Naive thymus-derived CD4-positive, alpha-beta T cell (primary cell): ENCODE measurements at regions of chr7 and their contacts with region 1.

Region 1: GRCh38 chr7:20798081-20798693 is 11.5 kb upstream of the SP8 start:
- DNase-seq: no peak
- ATAC-seq: peak; percentile 69
- H3K4me3 ChIP-seq: no peak overlapping the region
- H3K4me3 Mint-ChIP-seq: peak overlapping the region in 5 of 10 donors; percentile 69 to 88 (median 81)
- H3K27ac ChIP-seq: no peak overlapping the region
- H3K27ac Mint-ChIP-seq: no peak overlapping the region
- H3K4me1 ChIP-seq: peaks cover 7 to 13% of the 10 kb centered on the region in 2 donors
- H3K4me1 Mint-ChIP-seq: peaks cover 13 to 22% (median 20%) of the 10 kb centered on the region in 7 donors
- H3K27me3 ChIP-seq: peaks cover 12 to 39% of the 10 kb centered on the region in 2 donors
- H3K27me3 Mint-ChIP-seq: peaks cover 50 to 70% (median 61%) of the 10 kb centered on the region in 5 donors

Region 2: DNA sequence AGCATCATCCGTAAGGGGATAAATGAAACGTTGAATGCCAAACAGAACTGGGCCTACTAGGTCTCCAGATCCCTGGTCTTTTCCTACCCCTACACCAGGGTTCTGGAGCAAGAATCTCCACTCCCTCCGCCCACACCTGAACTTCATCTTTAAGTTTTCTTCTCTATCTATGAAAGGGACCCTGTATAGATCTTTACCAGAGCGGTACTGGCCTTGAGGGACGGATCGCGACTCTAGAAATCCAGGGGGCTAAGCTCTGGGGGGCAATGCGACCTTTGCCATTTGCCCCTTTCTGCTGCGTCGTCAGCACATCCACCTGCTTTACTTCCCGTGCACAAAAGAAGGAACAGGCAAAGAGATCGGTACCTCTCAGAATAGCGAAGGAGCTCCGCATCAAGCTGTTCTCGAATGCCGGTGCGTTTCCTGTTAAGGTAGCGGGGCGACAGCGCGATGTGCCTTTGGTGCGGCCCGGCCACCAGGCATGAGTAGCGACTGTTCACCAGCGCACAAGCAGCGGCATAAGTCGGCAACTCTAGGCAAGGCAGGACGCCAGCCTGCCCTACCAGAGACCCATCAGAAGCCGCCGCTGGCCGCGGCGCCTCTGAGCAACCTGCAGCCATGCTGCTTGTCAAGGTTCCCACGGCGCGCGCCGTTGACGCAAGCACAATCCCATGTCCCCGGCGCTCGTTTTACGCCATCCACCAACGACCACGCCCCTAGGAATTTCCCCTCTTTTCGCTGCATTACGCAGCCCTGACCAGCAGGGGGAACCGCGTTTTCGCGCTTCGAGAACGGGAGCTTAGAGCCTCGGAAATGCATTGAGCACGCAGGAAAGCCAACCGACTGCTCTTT is 1089.6 kb before region 1 on chr7 and contains the start of gene POLR1F:
- CTCF ChIA-PET with region 1: no interaction called
- POLR2A ChIA-PET with region 1: interaction called, 3 read pairs
- intact Hi-C with region 1: loop called in 1 of 2 experiments (anchors 10 kb)
- DNase-seq: peak; percentile 84 to 97 (median 95)
- ATAC-seq: peak; percentile 98
- H3K4me3 ChIP-seq: peak within 1 kb of the TSS; percentile 70
- H3K4me3 Mint-ChIP-seq: peak within 1 kb of the TSS; percentile 95 to 99 (median 97)
- H3K27ac ChIP-seq: peak within 1 kb of the TSS; percentile 77
- H3K27ac Mint-ChIP-seq: peak within 1 kb of the TSS; percentile 89 to 98 (median 95)
- H3K4me1 ChIP-seq: peaks cover 19 to 23% of the 10 kb centered on the region in 2 donors
- H3K4me1 Mint-ChIP-seq: peaks cover 31 to 66% (median 57%) of the 10 kb centered on the region in 7 donors
- H3K27me3 ChIP-seq: no peaks in the 10 kb centered on the region
- H3K27me3 Mint-ChIP-seq: peaks cover 0 to 5% (median 0%) of the 10 kb centered on the region in 5 donors
- total RNA-seq, gene POLR1F: 11.8 to 27.3 (median 19.0) TPM

Region 3: DNA sequence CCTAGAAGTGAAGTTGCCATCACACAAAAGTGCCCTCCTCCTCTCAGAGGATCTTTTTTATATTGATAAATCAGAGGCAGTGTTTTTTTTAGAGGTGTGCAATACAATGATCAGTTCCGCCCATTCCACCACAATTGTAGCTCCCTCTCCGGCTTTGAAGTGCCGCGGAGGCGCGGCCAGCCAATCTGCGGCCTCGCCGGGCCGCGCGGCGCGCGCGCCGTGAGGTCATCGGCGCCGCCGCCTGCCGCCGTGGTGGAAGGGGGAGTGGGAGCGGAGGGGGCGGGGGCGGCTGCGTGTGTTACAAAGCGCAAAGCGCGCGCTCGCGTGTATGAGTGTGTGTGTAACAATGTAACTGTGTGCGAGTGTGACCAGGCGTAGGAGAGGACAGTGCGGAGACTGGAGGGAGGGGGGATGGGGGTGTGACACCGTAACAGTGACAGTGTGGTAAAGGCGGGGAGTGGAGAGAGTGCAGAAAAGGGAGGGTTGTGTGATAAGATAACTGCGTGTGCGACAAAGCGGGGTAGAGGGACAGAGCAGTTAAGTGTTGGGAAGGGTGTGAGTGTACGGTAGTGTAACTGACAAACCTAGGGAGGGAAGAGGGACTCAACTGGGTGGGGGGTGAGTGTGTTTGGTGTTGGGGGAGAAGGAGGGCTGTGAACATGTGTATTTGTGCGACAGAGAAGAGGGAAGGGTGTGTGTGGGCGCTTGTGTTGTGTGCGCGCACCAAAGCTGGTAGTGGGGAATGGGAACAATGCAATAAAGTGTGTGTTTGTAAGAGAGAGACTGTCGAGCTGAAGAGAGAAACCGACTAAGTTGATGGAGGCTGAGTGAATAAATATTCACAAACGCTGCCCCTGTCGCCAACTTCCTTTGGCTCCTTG is 11.2 kb before region 1 on chr7 and contains the start of gene SP8:
- CTCF ChIA-PET with region 1: no interaction called
- POLR2A ChIA-PET with region 1: no interaction called
- intact Hi-C with region 1: loop called in 1 of 2 experiments (anchors 1 kb)
- DNase-seq: peak in 1 of 9 donors; percentile 12
- ATAC-seq: peak; percentile 10
- H3K4me3 ChIP-seq: no peak within 1 kb of the TSS
- H3K4me3 Mint-ChIP-seq: peak within 1 kb of the TSS; percentile 69 to 86 (median 80)
- H3K27ac ChIP-seq: no peak within 1 kb of the TSS
- H3K27ac Mint-ChIP-seq: peak within 1 kb of the TSS in 5 of 9 donors; percentile 19 to 81 (median 53)
- H3K4me1 ChIP-seq: no peaks in the 10 kb centered on the region
- H3K4me1 Mint-ChIP-seq: peaks cover 17 to 36% (median 26%) of the 10 kb centered on the region in 7 donors
- H3K27me3 ChIP-seq: peaks cover 0 to 47% of the 10 kb centered on the region in 2 donors
- H3K27me3 Mint-ChIP-seq: peaks cover 75 to 86% (median 81%) of the 10 kb centered on the region in 5 donors
- total RNA-seq, gene SP8: not detected

Region 4: GRCh38 chr7:20849401-20849800 is 51.2 kb after region 1 on chr7:
- CTCF ChIA-PET with region 1: no interaction called
- POLR2A ChIA-PET with region 1: no interaction called
- intact Hi-C with region 1: no loop called
- DNase-seq: no peak
- ATAC-seq: no peak
- H3K4me3 ChIP-seq: no peak overlapping the region
- H3K4me3 Mint-ChIP-seq: no peak overlapping the region
- H3K27ac ChIP-seq: no peak overlapping the region
- H3K27ac Mint-ChIP-seq: no peak overlapping the region
- H3K4me1 ChIP-seq: no peaks in the 10 kb centered on the region
- H3K4me1 Mint-ChIP-seq: peaks cover 0 to 3% (median 0%) of the 10 kb centered on the region in 7 donors
- H3K27me3 ChIP-seq: no peaks in the 10 kb centered on the region
- H3K27me3 Mint-ChIP-seq: peaks cover 0 to 9% (median 5%) of the 10 kb centered on the region in 5 donors